Sigmoid colon (tissue), 7 donors: ENCODE measurements at regions of chr3 and their contacts with region 1.

Region 1: DNA sequence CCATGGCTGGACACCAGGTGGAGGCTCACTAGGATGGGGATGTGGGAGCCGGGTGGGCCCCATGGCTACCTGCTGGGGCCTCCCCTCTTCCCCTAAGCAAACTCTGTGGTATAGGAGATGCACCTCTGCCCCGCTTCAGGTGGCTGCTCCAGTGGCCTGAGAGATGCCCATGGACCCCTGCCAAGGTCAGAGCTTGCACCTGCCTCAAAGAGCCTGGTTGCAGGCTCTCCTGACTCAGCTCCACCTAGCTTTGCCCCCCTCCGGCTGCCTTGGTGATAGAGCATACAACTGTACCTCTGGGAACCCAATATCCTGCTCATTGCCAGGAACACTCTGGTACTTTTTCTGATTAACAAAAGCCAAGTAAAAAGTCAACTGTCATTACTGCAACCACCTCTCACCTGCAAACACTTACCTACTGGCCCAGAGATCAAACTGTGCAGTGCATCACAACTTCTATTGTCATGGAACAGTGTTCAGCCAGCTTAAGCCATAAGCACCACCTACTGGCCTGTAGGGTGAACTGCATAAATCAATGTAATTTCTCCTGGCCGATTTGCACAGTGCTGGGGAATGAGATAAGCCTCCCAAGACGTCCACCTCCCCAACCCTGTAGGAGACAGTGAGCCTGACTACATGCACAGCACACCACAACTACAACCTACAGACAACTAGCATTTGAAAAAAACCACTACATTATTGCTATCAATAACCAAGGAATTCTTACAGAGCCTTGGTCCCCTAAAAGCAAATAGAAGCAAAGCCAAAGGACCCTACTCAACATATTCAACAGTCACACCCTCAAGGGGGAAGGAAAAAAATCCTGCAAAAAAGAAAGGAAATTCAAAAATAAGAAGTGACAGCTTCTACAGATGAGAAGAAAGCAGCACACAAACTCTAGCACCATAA is 352.4 kb upstream of the ARHGEF26 start:
- DNase-seq: peak; percentile 60
- H3K4me3 ChIP-seq: no peak overlapping the region
- H3K27ac ChIP-seq: no peak overlapping the region
- H3K4me1 ChIP-seq: no peaks in the 10 kb centered on the region
- H3K27me3 ChIP-seq: no peaks in the 10 kb centered on the region
- CTCF ChIP-seq: peak; percentile 35 to 80 (median 76)
- EP300 ChIP-seq: no peak
- POLR2A ChIP-seq: no peak

Region 2: DNA sequence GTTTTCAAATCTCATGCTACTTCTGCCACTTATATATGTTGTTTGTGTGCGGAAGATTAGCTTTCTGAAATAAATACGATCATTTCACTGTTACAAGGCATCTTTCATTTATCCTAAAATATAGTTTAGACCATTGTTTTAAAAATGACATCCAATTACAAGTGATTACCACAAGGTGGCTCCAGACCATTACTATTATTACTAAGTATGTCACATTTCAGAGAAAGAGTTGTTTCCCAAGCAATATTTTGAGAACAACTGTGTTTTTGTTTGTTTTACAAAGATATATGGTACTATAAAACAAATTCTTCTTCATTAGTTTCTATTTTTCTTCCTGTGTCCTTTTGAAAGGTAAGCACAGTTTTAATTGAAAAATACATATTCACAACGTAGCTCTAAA is 742.8 kb before region 1 on chr3:
- intact Hi-C with region 1: loop called (anchors 5 kb)
- DNase-seq: no peak
- H3K4me3 ChIP-seq: no peak overlapping the region
- H3K27ac ChIP-seq: no peak overlapping the region
- H3K4me1 ChIP-seq: peaks cover 0 to 19% (median 16%) of the 10 kb centered on the region in 4 donors
- H3K27me3 ChIP-seq: no peaks in the 10 kb centered on the region
- CTCF ChIP-seq: peak in 3 of 4 experiments; percentile 44 to 46 (median 45)
- EP300 ChIP-seq: no peak
- POLR2A ChIP-seq: no peak

Region 3: GRCh38 chr3:153284282-153284938 is 484.4 kb before region 1 on chr3:
- intact Hi-C with region 1: no loop called
- DNase-seq: peak; percentile 83
- H3K4me3 ChIP-seq: no peak overlapping the region
- H3K27ac ChIP-seq: peak overlapping the region in 3 of 4 donors; percentile 49 to 65 (median 49)
- H3K4me1 ChIP-seq: peaks cover 0 to 7% (median 3%) of the 10 kb centered on the region in 4 donors
- H3K27me3 ChIP-seq: no peaks in the 10 kb centered on the region
- CTCF ChIP-seq: no peak
- EP300 ChIP-seq: no peak
- POLR2A ChIP-seq: no peak

Region 4: DNA sequence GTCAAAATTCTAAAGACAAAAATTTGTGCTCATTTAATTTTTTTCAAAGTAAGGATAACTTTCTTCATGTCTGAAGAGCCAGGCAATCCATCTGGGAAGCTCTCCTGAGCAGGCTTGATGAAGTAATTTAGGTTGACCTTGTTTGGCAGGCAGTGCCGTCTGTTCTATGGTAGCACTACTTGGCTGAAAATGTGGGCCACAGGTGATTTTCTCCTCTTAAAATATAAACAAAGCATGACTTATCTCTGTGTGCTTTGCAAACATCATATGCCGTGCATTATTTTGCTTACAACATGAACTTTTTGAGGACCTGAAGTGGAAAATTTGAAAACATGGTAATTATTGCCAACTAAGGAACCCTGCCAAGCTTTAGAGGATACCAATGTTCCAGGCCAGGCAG is 463.6 kb before region 1 on chr3:
- intact Hi-C with region 1: loop called (anchors 10 kb)
- DNase-seq: no peak
- H3K4me3 ChIP-seq: no peak overlapping the region
- H3K27ac ChIP-seq: peak overlapping the region in 1 of 4 donors; percentile 45
- H3K4me1 ChIP-seq: peaks cover 0 to 31% (median 18%) of the 10 kb centered on the region in 4 donors
- H3K27me3 ChIP-seq: no peaks in the 10 kb centered on the region
- CTCF ChIP-seq: no peak
- EP300 ChIP-seq: no peak
- POLR2A ChIP-seq: no peak

Region 5: DNA sequence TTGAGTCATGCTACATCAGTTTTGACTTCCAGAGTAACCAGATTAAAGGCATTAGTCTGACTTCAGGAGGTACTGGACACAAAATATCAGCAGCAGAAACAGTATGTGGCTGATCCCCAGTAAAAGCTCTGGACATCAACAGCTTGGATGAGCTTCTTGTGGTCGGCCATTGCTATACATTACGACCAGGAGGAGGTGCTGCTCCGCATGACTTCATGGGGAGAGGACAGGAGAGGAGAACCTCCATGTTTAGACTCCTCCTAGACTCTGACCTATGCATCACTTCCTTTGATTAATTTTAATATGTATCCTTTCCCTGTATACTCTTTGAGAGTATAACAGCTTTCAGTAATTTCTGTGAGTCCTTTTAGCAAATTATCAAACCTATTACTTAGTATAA is 66.7 kb after region 1 on chr3:
- intact Hi-C with region 1: no loop called
- DNase-seq: no peak
- H3K4me3 ChIP-seq: no peak overlapping the region
- H3K27ac ChIP-seq: no peak overlapping the region
- H3K4me1 ChIP-seq: no peaks in the 10 kb centered on the region
- H3K27me3 ChIP-seq: no peaks in the 10 kb centered on the region
- CTCF ChIP-seq: no peak
- EP300 ChIP-seq: no peak
- POLR2A ChIP-seq: no peak